AG04449 (cell line): ENCODE measurements at regions of chr7 and their contacts with region 1.

Region 1: GRCh38 chr7:4973728-4974198 is 14.8 kb upstream of the MMD2 start:
- DNase-seq: peak; percentile 26
- H3K4me3 ChIP-seq: peak overlapping the region; percentile 79
- CTCF ChIP-seq: peak; percentile 82

Region 2: GRCh38 chr7:4883374-4884144 is 90.2 kb before region 1 on chr7 and contains the start of gene RADIL:
- CTCF ChIA-PET with region 1: interaction called, 12 read pairs
- POLR2A ChIA-PET with region 1: no interaction called
- DNase-seq: peak; percentile 16
- H3K4me3 ChIP-seq: peak within 1 kb of the TSS; percentile 54
- CTCF ChIP-seq: peak; percentile 93

Region 3: GRCh38 chr7:4931943-4932342 is 41.8 kb before region 1 on chr7:
- CTCF ChIA-PET with region 1: no interaction called
- POLR2A ChIA-PET with region 1: no interaction called
- DNase-seq: no peak
- H3K4me3 ChIP-seq: no peak overlapping the region
- CTCF ChIP-seq: no peak

Region 4: DNA sequence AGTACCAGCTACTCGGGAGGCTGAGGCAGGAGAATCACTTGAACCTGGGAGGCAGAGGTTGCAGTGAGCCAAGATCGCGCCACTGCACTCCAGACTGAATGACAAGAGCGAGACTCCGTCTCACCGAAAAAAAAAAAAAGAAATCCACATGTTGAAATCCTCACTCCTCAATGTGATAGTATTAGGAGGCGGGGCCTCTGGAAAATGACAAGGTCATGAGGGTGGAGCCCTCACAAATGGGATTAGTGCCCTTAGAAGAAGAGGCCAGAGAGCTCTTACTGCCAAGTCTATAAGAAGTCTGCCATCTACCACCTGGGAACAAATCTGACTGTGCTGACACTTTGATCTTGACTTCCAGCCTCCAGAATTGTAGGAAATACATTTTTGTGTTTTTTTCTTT is 25.4 kb before region 1 on chr7:
- CTCF ChIA-PET with region 1: no interaction called
- POLR2A ChIA-PET with region 1: no interaction called
- DNase-seq: no peak
- H3K4me3 ChIP-seq: no peak overlapping the region
- CTCF ChIP-seq: no peak

Region 5: DNA sequence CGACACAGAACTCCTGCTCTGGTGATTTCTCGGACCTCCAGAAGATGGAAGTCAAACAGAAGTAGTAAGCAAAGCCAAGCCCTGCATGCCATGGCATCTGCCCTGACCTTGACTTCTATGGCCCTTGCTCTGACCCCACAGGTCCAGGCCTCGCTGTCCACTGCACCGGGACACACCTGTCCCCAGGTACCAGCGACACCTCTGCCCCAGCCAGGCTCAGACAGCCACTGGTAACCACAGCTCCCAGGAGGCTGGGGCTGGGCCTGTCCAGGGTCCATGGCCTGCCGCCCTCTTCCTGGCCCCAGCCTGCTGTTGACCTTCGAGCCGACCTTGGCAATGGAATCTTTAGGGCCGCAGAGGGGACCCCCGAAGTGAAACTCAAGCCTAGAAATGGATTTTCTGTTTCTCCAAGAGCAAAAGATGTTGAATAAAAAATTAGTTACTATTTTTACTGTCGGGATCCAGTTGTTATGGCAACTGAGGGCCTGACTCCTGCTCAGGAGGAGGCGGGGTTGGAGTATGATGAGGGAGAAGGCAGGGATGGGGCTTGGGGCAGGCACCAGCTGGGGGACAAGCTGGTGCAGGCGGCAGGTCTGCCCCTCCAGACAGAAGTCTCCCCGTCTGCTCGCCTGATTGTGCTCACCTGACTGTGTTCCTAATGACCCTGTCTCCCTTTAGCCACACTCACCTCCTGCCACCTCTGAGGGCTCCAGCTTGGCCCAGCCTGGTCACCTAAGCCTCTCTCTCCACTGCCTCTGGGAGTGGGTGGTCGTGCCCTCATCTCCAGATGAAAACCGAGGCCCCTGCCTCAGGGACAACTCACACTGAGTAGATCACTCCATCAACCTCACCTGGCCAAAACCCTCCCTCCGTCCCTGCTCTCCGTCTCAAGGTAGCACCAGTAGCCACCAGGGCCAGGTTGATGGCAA is 10.6 kb before region 1 on chr7:
- CTCF ChIA-PET with region 1: interaction called, 13 read pairs
- POLR2A ChIA-PET with region 1: no interaction called
- DNase-seq: no peak
- H3K4me3 ChIP-seq: no peak overlapping the region
- CTCF ChIP-seq: no peak

Region 6: DNA sequence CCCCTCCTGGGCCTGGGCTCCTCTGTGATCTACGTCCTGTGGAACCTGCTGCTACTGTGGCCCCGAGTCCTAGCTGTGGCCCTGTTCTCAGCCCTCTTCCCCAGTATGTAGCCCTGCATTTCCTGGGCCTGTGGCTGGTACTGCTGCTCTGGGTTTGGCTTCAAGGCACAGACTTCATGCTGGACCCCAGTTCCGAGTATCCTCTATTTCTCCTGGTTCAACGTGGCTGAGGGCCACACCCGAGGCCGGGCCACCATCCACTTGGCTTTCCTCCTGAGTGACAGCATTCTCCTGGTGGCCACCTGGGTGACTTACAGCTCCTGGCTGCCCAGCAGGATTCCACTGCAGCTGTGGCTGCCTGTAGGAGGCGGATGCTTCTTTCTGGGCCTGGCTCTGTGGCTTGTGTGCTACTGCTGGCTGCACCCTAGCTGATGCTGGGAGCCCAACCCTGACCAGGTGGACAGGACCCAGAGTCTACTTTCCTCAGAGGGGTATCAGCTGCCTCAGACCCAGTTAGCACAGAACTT is 23.0 kb after region 1 on chr7:
- CTCF ChIA-PET with region 1: interaction called, 11 read pairs
- POLR2A ChIA-PET with region 1: no interaction called
- DNase-seq: no peak
- H3K4me3 ChIP-seq: no peak overlapping the region
- CTCF ChIP-seq: no peak

Region 7: GRCh38 chr7:5117095-5117970 is 143.6 kb after region 1 on chr7:
- CTCF ChIA-PET with region 1: no interaction called
- POLR2A ChIA-PET with region 1: no interaction called
- DNase-seq: no peak
- H3K4me3 ChIP-seq: no peak overlapping the region
- CTCF ChIP-seq: no peak